Posterior vena cava (tissue), 2 donors: ENCODE measurements at regions of chr4 and their contacts with region 1.

Region 1: DNA sequence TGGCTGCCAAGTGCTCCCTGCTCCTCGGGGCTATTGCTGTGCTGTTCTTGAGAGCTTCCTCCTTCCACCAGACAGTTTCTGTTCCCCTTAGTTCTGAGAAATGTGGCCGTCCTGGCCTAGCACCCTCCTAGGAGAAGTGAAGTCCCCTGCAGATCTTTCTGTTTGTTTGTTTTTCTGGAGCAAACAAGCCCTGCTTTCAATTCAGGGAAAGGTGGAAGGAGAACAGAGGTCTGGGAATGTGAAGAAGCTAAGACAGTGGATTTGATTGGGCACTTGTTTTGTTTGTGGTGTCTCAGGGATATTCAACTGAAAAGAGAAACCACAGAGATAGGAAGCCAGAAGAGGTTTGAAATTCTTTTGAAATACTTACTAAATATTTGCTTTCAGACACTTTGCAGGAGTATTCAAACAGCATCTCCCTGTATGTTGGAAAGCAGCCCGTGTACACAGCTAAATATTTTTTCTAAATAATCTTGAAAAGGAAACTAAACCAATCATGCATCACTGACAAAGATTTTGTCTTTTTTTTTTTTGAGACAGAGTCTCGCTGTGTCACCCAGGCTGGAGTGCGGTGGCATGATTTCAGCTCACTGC is 36.5 kb upstream of the PPM1K start:
- DNase-seq: no peak

Region 2: GRCh38 chr4:87026800-87027495 is 1293.9 kb before region 1 on chr4:
- intact Hi-C with region 1: no loop called
- DNase-seq: no peak

Region 3: GRCh38 chr4:88275516-88275915 is 45.4 kb before region 1 on chr4:
- intact Hi-C with region 1: no loop called
- DNase-seq: no peak

Region 4: DNA sequence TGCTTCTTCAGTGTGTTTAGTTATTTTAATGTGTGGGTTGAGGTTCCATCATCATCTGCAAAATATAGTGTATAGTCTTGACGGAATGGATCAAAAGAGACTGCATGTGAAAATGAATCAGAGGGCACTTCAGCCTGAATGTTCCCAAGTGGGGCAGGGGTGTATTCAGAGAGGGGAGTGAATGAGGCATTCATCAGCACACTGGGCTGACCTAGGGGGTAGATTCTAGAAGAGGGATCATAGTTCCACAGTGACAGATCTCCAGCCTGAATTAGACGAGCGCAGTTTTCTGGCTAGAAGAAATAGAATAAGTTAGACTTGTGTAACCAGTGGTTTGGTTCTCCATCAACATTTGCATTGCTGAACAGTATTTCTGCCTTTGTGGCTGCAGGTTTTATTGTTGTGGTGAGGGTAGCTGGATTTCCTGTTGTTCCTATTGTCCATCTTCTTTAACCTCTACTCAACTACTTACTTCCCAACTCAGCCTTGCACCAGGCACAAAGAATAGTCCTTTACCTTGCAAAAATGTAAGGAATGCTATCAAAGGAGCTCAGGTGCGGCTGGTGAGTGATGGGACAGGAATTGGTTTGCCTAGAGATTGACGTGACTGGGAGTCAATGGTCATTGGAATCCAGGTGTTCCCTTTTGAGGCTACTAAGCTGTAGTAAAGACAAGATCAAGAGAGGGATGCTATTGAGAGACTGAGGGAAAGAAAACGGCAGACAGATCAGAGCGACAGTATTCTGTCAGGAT is 325.8 kb after region 1 on chr4:
- intact Hi-C with region 1: loop called in 1 of 2 experiments (anchors 10 kb)
- DNase-seq: no peak

Region 5: GRCh38 chr4:90127223-90127705 is 1806.4 kb after region 1 on chr4 and contains the start of gene CCSER1:
- intact Hi-C with region 1: no loop called
- DNase-seq: peak; percentile 92
- total RNA-seq, gene CCSER1: 1.8 to 7.0 TPM